Right cardiac atrium (tissue), 5 donors: ENCODE measurements at regions of chr5 and their contacts with region 1.

Region 1: GRCh38 chr5:5492087-5492933 is 69.8 kb downstream of the ICE1 start:
- DNase-seq: no peak
- ATAC-seq: peak in 1 of 2 donors; percentile 26
- H3K4me3 ChIP-seq: no peak overlapping the region
- H3K27ac ChIP-seq: no peak overlapping the region
- H3K4me1 ChIP-seq: no peaks in the 10 kb centered on the region
- H3K27me3 ChIP-seq: no peaks in the 10 kb centered on the region

Region 2: DNA sequence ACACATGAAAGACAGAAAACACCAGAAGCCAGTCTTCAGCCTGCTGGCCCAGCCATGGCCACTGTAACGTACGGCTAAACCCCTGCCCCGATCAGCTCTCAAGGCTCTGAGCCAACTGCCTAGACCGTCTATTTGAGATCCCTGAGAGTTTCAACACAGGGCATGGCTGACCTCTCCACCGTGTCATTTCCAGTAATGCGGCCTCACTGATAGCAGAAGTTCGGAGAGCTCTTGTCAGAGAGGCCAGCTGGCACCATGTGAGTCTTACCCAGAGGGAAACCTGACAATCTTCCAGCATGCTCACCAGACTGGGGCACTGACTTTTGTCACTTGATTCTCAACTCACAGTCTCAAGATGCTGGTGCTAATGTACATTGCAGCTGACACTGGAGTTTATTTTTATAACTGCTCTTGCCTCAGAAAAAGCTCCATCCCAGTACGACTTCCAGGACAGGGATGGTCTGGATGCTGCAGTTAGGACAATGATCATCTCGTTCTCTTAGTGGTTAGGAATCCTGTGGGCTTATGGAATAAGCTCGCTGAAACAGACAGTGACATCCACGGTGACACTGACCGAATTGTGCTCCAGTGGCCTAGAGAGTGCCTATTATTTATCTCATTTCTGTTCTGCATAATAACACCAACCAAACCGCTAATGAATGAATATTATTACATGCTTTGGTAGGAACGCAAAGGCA is 302.9 kb after region 1 on chr5:
- intact Hi-C with region 1: loop called in 1 of 4 experiments (anchors 10 kb)
- DNase-seq: peak; percentile 52 to 59 (median 58)
- ATAC-seq: peak; percentile 89 to 96
- H3K4me3 ChIP-seq: no peak overlapping the region
- H3K27ac ChIP-seq: peak overlapping the region; percentile 7
- H3K4me1 ChIP-seq: no peaks in the 10 kb centered on the region
- H3K27me3 ChIP-seq: no peaks in the 10 kb centered on the region

Region 3: GRCh38 chr5:6370580-6370979 is 878.3 kb after region 1 on chr5:
- intact Hi-C with region 1: loop called in 1 of 4 experiments (anchors 5 kb)
- DNase-seq: no peak
- ATAC-seq: no peak
- H3K4me3 ChIP-seq: no peak overlapping the region
- H3K27ac ChIP-seq: no peak overlapping the region
- H3K4me1 ChIP-seq: no peaks in the 10 kb centered on the region
- H3K27me3 ChIP-seq: no peaks in the 10 kb centered on the region

Region 4: DNA sequence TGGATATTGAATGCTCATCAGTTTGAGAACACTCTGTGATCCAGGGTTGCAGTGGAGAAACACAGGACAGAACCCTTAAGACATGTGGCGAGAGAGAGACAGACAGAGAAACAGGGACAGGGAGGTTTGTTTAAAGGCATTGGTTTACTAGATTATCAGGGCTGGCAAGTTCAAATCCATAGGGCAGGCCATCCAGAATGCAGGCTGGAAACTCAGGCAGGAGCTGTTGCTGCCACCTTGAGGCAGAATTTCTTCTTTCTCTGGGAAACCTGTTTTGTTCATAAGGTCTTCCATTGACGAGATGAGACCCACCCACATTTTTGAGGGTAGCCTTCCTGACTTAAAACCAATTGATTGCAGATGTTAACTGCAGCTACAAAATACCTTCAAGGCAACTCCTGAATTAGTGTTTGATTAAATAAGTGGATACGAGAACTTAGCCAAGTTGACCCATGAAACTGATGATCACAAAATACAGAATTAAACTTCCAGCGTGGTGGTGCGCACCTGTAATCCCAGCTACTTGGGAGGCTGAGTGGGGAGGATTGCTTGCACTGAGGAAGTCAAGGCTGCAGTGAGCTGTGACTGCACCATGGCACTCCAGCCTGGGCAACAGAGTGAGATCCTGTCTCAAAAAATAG is 1084.7 kb after region 1 on chr5:
- intact Hi-C with region 1: loop called in 2 of 4 experiments (anchors 5 to 10 kb)
- DNase-seq: no peak
- ATAC-seq: peak; percentile 34 to 46
- H3K4me3 ChIP-seq: no peak overlapping the region
- H3K27ac ChIP-seq: no peak overlapping the region
- H3K4me1 ChIP-seq: no peaks in the 10 kb centered on the region
- H3K27me3 ChIP-seq: no peaks in the 10 kb centered on the region

Region 5: GRCh38 chr5:6745706-6746222 is 1253.5 kb after region 1 on chr5:
- intact Hi-C with region 1: loop called in 1 of 4 experiments (anchors 10 kb)
- DNase-seq: no peak
- ATAC-seq: peak; percentile 68 to 71
- H3K4me3 ChIP-seq: no peak overlapping the region
- H3K27ac ChIP-seq: peak overlapping the region; percentile 50
- H3K4me1 ChIP-seq: no peaks in the 10 kb centered on the region
- H3K27me3 ChIP-seq: no peaks in the 10 kb centered on the region